Caco-2 (cell line): ENCODE measurements at regions of chr11 and their contacts with region 1.

Region 1: GRCh38 chr11:63567044-63567840 is 4.1 kb upstream of the PLAAT2 start:
- DNase-seq: peak; percentile 47 to 52
- H3K4me3 ChIP-seq: no peak overlapping the region
- H3K4me3 Mint-ChIP-seq: peak overlapping the region; percentile 53
- H3K27ac Mint-ChIP-seq: peak overlapping the region; percentile 70
- H3K4me1 ChIP-seq: peaks cover 38% of the 10 kb centered on the region
- H3K4me1 Mint-ChIP-seq: peaks cover 42% of the 10 kb centered on the region
- H3K27me3 ChIP-seq: no peaks in the 10 kb centered on the region
- H3K27me3 Mint-ChIP-seq: no peaks in the 10 kb centered on the region
- CTCF ChIP-seq: no peak

Region 2: DNA sequence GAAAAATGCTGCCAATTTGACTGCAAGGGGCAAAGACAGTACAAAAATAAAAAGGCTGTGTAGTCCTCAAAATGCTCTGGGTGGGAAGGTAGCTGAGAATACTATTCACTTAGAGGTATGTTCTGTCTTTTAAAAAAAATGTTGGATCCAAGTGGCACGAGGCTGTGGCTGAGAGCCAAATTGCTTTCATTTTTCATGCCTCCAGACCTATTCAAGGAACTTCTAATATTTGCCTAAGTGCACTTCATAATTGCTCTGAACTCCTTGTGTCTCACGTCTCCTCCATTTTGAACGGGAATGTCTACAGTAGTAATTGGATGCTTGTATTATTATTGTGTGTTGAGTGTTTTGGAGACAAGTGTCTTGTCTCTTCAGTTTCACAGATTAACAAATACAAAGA is 304.7 kb before region 1 on chr11:
- CTCF ChIA-PET with region 1: no interaction called
- POLR2A ChIA-PET with region 1: no interaction called
- intact Hi-C with region 1: no loop called
- DNase-seq: no peak
- H3K4me3 ChIP-seq: no peak overlapping the region
- H3K4me3 Mint-ChIP-seq: no peak overlapping the region
- H3K27ac Mint-ChIP-seq: no peak overlapping the region
- H3K4me1 ChIP-seq: no peaks in the 10 kb centered on the region
- H3K4me1 Mint-ChIP-seq: no peaks in the 10 kb centered on the region
- H3K27me3 ChIP-seq: no peaks in the 10 kb centered on the region
- H3K27me3 Mint-ChIP-seq: no peaks in the 10 kb centered on the region
- CTCF ChIP-seq: no peak

Region 3: DNA sequence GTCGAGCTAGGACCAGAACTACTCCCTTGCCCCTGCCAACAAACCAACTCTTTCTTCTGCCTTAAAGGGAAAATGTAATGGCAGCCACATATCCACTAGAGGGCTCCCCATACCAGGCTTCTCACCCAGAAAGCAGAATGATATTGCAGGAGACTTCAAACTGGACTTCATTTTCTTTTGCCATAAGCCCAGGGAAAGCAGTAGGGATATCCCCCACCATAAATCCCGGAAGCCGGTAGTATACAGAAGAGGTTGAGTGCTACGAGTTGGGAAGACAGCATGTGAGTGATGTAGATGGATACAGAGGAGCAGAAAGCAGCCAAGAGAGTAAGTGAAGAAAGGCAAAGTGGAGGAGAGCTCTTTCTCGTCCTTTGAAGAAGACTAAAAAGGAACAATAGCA is 88.3 kb before region 1 on chr11:
- CTCF ChIA-PET with region 1: no interaction called
- POLR2A ChIA-PET with region 1: no interaction called
- intact Hi-C with region 1: no loop called
- DNase-seq: peak; percentile 74 to 80
- H3K4me3 ChIP-seq: no peak overlapping the region
- H3K4me3 Mint-ChIP-seq: no peak overlapping the region
- H3K27ac Mint-ChIP-seq: no peak overlapping the region
- H3K4me1 ChIP-seq: peaks cover 12% of the 10 kb centered on the region; the same call in 1 of the 2 replicates
- H3K4me1 Mint-ChIP-seq: no peaks in the 10 kb centered on the region
- H3K27me3 ChIP-seq: no peaks in the 10 kb centered on the region
- H3K27me3 Mint-ChIP-seq: no peaks in the 10 kb centered on the region
- CTCF ChIP-seq: peak; percentile 94

Region 4: GRCh38 chr11:63534895-63535461 is 32.3 kb before region 1 on chr11:
- CTCF ChIA-PET with region 1: no interaction called
- POLR2A ChIA-PET with region 1: no interaction called
- intact Hi-C with region 1: loop called (anchors 5 kb)
- DNase-seq: no peak
- H3K4me3 ChIP-seq: no peak overlapping the region
- H3K4me3 Mint-ChIP-seq: no peak overlapping the region
- H3K27ac Mint-ChIP-seq: no peak overlapping the region
- H3K4me1 ChIP-seq: peaks cover 47% of the 10 kb centered on the region
- H3K4me1 Mint-ChIP-seq: peaks cover 35% of the 10 kb centered on the region
- H3K27me3 ChIP-seq: no peaks in the 10 kb centered on the region
- H3K27me3 Mint-ChIP-seq: no peaks in the 10 kb centered on the region
- CTCF ChIP-seq: no peak